ENCODE measurements at regions of chrX and their contacts with region 1.

Region 1: DNA sequence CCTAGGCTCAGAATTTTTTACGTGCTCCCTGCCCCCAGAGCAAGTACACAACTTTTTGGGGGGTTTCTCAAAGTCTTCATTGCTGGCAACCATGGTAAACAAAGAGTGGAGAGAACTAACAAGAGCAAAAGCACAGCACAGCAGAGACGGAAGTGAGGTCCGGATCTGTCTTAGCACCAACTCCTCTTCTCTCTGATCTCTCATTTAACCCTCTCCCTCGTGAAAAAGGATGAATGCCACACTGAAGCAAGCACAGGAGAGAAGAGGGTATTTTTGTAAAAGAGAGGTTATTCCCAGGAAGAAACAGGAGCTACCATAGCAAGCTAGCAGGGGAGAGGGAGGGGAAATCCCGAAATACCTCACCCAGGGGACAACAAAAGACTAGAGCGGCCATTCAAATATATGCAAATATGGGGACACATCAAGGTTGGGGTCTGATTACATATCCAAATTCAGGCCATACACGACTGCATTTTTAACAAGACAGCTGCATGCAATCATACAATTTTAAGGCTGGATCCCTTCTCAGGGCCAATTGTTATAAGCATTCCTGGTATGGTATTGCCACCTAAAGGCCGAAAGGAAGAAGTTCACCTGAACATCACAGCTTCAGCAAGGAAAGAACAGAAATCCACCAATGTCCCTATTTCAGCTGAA is 46.6 kb downstream of the CD40LG start:
- DNase-seq: peak; percentile 20
- H3K4me3 ChIP-seq: no peak overlapping the region
- H3K27ac ChIP-seq: no peak overlapping the region
- H3K4me1 ChIP-seq: peaks cover 5% of the 10 kb centered on the region
- H3K27me3 ChIP-seq: no peaks in the 10 kb centered on the region
- CTCF ChIP-seq: peak; percentile 79 to 80

Region 2: DNA sequence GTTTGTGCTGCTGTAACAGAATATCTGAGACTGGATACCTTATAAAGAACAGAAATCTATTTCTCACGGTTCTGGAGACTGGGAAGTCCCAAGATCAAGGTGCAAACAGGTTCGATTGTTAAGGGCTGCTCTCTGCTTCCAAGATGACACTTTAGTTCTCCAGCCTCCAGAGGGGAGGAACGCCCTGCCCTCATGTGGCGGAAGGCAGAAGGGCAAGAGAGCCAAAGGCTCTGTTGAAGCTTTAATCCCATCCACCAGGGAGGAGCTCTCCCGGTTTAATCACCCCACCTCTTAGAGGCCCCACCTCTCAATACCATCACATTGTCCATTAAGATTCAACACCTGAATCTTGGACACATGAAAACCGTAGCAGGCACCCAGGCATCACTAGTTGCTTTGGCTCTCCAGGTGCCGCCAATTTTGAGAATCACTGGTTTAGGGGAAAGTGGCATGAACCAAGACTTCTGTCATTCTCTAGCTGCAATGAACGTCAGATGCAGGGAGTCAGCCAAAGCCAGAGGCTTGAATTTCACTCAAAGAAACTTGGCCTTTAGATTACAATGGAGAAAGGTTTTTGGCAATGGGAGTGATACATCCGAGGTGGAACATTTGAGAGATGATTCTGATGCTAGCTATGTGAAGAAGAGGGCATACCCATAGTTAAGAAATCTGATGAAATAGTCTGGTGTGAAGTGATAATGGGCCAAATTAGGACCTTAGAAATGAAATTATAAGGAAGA is 531.6 kb before region 1 on chrX:
- CTCF ChIA-PET with region 1: no interaction called
- dilution Hi-C with region 1: no loop called
- in situ Hi-C with region 1: no loop called
- intact Hi-C with region 1: loop called (anchors 10 kb)
- DNase-seq: peak; percentile 45
- H3K4me3 ChIP-seq: no peak overlapping the region
- H3K27ac ChIP-seq: no peak overlapping the region
- H3K4me1 ChIP-seq: no peaks in the 10 kb centered on the region
- H3K27me3 ChIP-seq: peaks cover 3% of the 10 kb centered on the region
- CTCF ChIP-seq: peak; percentile 66 to 86

Region 3: GRCh38 chrX:136268051-136269048 is 426.2 kb before region 1 on chrX:
- CTCF ChIA-PET with region 1: no interaction called
- dilution Hi-C with region 1: no loop called
- in situ Hi-C with region 1: loop called in 1 of 2 experiments (anchors 25 kb)
- intact Hi-C with region 1: loop called (anchors 10 kb)
- DNase-seq: no peak
- H3K4me3 ChIP-seq: no peak overlapping the region
- H3K27ac ChIP-seq: no peak overlapping the region
- H3K4me1 ChIP-seq: peaks cover 7% of the 10 kb centered on the region
- H3K27me3 ChIP-seq: no peaks in the 10 kb centered on the region
- CTCF ChIP-seq: peak; percentile 71 to 84

Region 4: DNA sequence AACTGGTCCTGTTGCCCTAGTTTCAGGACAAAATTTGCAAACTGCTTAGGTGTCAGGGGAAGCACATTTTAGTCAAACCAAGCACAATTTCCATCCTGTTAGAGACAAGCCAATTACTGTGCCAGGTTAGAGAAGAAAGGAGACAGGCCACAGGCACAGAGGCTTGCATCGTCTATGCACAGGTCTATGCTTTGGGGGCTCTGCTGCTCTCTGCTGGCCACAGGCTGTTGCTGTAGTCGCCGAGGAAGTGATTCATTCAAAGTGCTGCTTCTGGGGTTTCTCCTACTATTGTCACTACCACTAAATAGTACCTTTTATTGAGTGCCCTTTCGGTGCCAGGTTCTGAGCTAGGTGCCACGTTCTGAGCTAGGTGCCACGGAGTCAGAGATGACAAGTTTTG is 117.0 kb before region 1 on chrX:
- CTCF ChIA-PET with region 1: no interaction called
- dilution Hi-C with region 1: no loop called
- in situ Hi-C with region 1: no loop called
- intact Hi-C with region 1: loop called (anchors 5 kb)
- DNase-seq: peak; percentile 37
- H3K4me3 ChIP-seq: no peak overlapping the region
- H3K27ac ChIP-seq: no peak overlapping the region
- H3K4me1 ChIP-seq: no peaks in the 10 kb centered on the region
- H3K27me3 ChIP-seq: no peaks in the 10 kb centered on the region
- CTCF ChIP-seq: peak; percentile 68 to 79